ENCODE measurements at regions of chr16 and their contacts with region 1.

Region 1: GRCh38 chr16:71484006-71484893 is 4.9 kb downstream of the ZNF19 start:
- DNase-seq: peak; percentile 91
- H3K4me3 ChIP-seq: peak overlapping the region; percentile 73 to 91 (median 75)
- H3K27ac ChIP-seq: peak overlapping the region; percentile 86
- H3K4me1 ChIP-seq: no peaks in the 10 kb centered on the region
- H3K27me3 ChIP-seq: no peaks in the 10 kb centered on the region
- CTCF ChIP-seq: no peak

Region 2: GRCh38 chr16:71449020-71449419 is 35.2 kb before region 1 on chr16:
- CTCF ChIA-PET with region 1: interaction called, 6 read pairs
- dilution Hi-C with region 1: no loop called
- in situ Hi-C with region 1: no loop called
- intact Hi-C with region 1: loop called (anchors 5 kb)
- DNase-seq: no peak
- H3K4me3 ChIP-seq: no peak overlapping the region
- H3K27ac ChIP-seq: no peak overlapping the region
- H3K4me1 ChIP-seq: no peaks in the 10 kb centered on the region
- H3K27me3 ChIP-seq: no peaks in the 10 kb centered on the region
- CTCF ChIP-seq: no peak

Region 3: DNA sequence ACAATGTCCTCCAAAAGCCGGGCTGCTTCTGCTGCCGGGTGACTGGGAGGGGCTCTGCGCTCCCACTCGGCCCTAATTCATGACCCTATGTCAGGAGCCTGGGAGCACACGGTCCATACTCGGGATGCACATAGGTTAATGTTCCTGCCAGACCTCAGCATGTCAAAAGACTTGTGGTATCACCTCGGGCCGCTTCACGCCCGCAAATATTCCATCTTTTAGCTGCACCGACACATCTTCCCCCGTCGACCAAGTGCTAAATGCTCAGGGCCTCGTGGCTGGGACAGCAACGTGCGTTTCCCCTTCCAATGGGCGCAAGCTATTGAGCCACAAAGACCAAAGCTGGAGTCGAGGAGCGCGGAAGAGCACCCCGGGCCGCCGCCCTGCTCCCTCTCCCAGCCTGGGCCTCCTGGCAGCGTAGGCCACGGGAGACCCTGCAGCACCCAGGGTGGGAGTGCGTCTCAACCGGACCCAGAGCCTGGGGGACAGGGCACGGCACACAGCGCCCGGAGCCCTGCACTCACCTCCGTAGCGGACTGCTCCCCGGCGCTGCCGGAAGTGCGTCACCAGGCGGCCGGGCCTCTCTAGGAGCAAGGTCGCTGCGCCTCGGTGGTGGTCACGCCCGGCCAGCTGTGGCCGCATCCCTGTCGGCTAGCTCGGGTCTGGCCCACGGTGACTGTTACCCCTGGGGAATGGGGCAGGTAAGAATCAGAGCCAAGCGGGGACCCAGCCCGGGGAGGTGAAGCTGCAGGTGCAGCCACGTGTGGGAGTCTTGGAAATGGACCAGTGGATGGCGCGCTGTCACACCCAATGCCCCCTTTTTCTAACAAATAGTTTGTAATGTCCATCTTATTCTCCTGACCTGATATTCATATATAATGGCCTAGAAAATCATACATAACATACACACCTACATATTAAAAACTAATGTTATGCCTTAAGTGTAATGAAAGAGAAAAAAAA is 22.3 kb before region 1 on chr16 and contains the start of gene ZNF23:
- CTCF ChIA-PET with region 1: interaction called, 6 read pairs
- dilution Hi-C with region 1: no loop called
- in situ Hi-C with region 1: no loop called
- intact Hi-C with region 1: loop called (anchors 1 kb)
- DNase-seq: peak; percentile 70
- H3K4me3 ChIP-seq: peak within 1 kb of the TSS; percentile 83 to 99 (median 94)
- H3K27ac ChIP-seq: peak within 1 kb of the TSS; percentile 82
- H3K4me1 ChIP-seq: peaks cover 18% of the 10 kb centered on the region
- H3K27me3 ChIP-seq: no peaks in the 10 kb centered on the region
- CTCF ChIP-seq: peak in 1 of 2 donors; percentile 28
- total RNA-seq, gene ZNF23: 6.2 to 16.2 TPM

Region 4: DNA sequence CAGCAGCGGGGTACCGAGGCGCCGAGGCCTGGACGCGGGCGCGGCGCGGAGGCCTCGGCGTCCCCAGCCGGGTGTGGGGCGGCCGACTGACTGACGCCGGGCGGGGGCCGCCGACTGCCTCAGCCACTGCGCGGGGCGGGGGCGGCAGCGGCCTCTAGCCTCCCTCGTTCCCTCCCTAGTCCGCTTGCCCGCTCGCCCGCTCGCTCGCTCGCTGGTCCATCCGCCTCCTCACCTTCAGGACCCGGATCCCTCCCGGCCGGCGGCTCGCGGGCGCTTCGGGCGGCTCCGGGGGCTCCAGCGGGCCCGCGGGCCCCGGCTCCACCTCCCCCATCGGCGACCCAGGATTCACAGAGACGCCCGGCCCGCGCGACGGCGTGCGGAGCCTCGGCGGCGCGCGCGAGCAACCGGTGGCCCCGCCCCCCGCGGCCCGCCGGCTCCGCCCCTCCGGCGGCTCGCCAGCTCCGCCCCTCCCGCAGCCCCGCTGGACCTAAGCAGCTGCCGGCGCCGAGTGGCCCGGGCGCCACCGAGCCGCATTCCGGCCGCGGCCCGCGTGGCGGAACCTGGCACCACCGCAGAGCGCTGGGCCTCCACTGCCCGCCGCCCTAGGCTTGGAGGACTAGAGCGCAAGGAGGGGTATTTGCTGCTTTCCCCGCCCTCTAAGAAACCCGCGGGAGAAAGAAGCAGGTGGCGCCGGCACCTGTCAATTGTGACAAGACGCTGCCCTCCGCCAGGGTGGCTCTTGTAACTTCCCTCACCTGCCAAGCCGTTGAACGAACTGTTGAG is 239.5 kb after region 1 on chr16:
- CTCF ChIA-PET with region 1: no interaction called
- dilution Hi-C with region 1: no loop called
- in situ Hi-C with region 1: no loop called
- intact Hi-C with region 1: no loop called
- DNase-seq: peak; percentile 57
- H3K4me3 ChIP-seq: peak overlapping the region; percentile 63 to 70 (median 64)
- H3K27ac ChIP-seq: peak overlapping the region; percentile 63
- H3K4me1 ChIP-seq: peaks cover 12% of the 10 kb centered on the region
- H3K27me3 ChIP-seq: no peaks in the 10 kb centered on the region
- CTCF ChIP-seq: no peak

Measured in mammary epithelial cell (primary cell).